Right ventricle myocardium superior (tissue), 1 donor: ENCODE measurements at regions of chr2 and their contacts with region 1.

Region 1: DNA sequence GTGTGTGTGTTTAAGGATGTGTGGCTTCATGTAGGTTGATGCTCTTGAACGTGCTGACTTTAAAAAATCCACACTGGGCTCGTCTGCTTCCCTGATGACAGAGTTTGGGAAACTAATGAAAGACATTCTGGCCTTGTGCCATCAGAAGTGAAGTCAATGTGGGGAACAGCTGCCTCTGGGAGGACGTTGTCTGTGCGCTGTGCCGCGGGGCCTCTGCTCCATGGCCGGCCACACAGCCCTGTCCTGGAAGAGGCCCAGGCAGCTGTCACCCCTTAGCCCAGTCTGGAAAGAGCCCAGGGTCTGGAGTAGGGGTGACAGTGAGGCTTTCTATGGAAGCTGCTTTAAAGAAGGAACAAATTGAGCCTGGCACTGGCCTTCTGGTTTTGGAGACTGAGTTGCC is 155.8 kb downstream of the SH3RF3 start:
- DNase-seq: peak; percentile 77
- ATAC-seq: peak; percentile 88

Region 2: DNA sequence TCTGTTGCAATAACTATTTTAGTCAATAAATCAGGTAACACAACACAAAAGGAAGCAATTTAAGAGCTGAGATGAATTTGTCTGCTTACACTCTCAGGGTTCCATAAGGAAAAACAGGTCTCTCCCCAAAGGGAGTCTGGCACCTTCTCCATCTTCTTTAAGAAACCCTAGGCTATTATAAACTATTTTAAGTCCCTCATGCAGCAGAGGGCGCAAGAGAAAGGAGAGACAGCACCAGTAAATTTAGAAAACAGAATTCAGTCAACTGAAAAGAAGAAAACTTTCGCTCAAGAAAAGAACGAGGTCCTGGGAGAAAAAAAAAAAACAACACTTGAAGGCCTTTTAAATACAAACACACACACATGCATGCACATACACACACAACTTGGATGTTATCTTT is 888.0 kb before region 1 on chr2:
- intact Hi-C with region 1: no loop called
- DNase-seq: no peak
- ATAC-seq: no peak

Region 3: GRCh38 chr2:108971661-108972566 is 312.9 kb before region 1 on chr2:
- intact Hi-C with region 1: no loop called
- DNase-seq: peak; percentile 45
- ATAC-seq: peak; percentile 84

Region 4: GRCh38 chr2:109497463-109497862 is 212.6 kb after region 1 on chr2:
- intact Hi-C with region 1: loop called (anchors 10 kb)
- DNase-seq: no peak
- ATAC-seq: no peak